Right cardiac atrium (tissue), 5 donors: ENCODE measurements at regions of chr20 and their contacts with region 1.

Region 1: DNA sequence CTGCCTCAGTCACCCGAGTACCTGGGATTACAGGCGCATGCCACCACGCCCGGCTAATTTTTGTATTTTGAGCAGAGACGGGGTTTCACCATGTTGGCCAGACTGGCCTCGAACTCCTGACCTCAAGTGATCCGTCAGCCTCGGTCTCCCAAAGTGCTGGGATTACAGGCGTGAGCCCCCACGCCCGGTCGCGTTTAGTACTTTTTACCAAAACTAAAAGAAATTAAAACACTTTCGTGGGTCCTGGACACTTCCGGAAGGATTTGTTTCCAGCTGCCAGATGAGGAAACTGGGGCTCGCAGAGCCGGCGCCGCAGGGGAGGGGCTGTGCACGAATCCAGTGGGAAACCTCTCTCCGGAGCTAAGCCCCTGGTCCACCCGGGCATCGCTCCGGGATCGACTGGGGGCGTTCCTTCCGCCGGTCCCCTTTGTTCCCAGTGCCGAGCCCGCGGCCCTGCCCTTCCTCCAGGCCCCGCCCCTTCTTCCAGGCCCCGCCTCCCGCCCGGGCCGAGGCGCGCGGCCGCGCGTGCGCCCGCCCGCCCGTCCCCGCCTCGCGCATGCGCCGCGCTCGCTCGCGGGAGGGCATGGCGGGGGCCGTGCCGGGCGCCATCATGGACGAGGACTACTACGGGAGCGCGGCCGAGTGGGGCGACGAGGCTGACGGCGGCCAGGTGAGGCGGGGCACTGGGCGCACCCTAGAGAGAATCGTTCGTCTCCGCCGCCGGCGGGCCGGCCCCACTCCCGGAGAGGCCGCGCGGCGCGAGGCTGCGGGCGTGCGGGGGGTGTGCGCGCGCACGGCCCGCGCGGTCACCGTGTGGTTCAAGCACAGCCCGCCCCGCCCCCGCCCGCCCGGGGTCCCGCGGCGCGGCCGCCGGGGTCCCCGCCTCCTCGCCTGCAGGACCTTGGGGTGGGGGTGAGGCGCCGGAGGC is at the start of gene NELFCD:
- DNase-seq: peak; percentile 90 to 97 (median 96)
- ATAC-seq: peak; percentile 93 to 96
- H3K4me3 ChIP-seq: peak within 1 kb of the TSS; percentile 99
- H3K27ac ChIP-seq: peak within 1 kb of the TSS; percentile 87
- H3K4me1 ChIP-seq: peaks cover 11% of the 10 kb centered on the region
- H3K27me3 ChIP-seq: no peaks in the 10 kb centered on the region
- total RNA-seq, gene NELFCD: 26.4 to 33.0 (median 28.9) TPM

Region 2: DNA sequence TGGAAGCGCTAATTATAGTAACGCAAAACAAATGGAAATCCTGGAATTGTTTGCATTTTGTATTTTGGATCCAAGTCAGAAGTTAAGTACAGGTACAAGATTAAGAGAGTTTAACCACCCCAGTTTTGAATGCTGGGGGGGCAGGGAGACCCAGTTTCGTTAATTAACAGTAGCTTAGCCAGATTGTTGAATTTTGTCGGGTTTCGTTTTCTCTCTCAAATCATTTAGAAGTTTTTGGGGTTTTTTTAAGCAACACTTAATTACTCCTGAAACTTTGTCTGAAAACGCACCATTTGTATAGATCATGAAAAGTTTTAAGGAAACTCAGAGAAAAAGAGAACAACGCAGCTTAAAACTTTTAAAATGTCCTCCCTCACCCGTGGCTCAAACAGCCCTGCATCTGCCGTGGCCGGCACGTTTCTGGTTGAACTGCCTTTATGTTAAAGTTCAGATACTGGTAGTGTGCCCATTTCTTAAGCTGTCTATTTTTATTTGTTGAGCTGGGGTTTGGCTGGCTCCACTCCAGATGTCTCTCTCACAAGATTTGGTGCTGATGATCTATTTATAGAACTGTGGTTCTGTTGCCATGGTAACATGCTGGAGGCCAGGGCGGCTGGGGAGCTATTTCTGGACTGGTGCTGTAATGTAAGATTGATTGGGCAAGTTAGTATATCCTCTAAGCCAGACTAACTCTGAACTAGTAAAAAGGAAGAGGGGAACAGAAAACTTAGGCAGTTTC is 73.4 kb before region 1 on chr20:
- intact Hi-C with region 1: loop called in 1 of 4 experiments (anchors 5 kb)
- DNase-seq: peak; percentile 88 to 92 (median 90)
- ATAC-seq: peak; percentile 94 to 95
- H3K4me3 ChIP-seq: peak overlapping the region; percentile 44
- H3K27ac ChIP-seq: peak overlapping the region; percentile 95
- H3K4me1 ChIP-seq: peaks cover 3% of the 10 kb centered on the region
- H3K27me3 ChIP-seq: no peaks in the 10 kb centered on the region